ENCODE measurements at regions of chr16 and their contacts with region 1.

Region 1: DNA sequence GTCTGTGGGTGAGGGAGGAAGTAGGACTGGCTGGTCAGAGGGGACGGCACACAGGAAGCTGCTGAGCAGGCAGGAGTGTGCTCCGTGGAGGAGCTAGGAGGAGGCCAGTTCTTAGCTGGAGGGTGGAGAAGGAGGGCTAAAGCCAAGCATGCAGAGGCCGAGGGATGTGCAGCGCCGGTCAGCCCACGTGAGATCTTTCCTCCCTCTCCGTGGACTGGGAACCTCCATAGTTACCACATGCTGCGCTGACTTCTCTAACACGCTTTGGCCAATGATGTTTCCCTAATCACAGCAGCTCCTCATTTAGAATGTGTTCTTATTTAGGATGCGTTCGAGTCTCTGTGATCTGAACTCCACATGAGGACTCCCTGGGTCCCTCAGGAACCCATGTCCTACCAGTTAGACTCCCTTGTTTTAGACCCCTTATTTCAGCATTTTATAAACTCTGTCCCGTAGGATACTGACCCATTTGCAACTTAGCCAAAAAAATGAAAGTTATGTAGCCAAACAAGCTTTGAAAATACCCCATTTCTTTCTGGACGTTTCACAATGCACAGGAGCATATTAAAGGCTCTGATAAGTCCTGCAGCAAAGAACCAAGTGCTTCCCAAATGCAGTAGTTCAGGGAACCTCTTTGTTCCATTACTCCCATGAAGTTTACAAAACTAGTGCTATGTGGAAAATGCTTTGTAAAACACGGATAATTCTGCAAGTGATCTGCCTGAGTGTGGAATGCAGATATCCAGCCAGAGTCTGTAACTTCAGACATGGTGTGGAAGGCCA is 51.4 kb downstream of the IRF8 start:
- DNase-seq: no peak
- ATAC-seq: no peak
- H3K4me3 ChIP-seq: no peak overlapping the region
- H3K27ac ChIP-seq: no peak overlapping the region
- H3K4me1 ChIP-seq: no peaks in the 10 kb centered on the region
- H3K27me3 ChIP-seq: no peaks in the 10 kb centered on the region; the same call in 1 of the 2 replicates
- CTCF ChIP-seq: no peak

Region 2: GRCh38 chr16:85706427-85707034 is 243.8 kb before region 1 on chr16:
- CTCF ChIA-PET with region 1: interaction called, 14 read pairs
- POLR2A ChIA-PET with region 1: no interaction called
- in situ Hi-C with region 1: no loop called
- intact Hi-C with region 1: no loop called
- DNase-seq: no peak
- ATAC-seq: no peak
- H3K4me3 ChIP-seq: no peak overlapping the region
- H3K27ac ChIP-seq: no peak overlapping the region
- H3K4me1 ChIP-seq: no peaks in the 10 kb centered on the region
- H3K27me3 ChIP-seq: no peaks in the 10 kb centered on the region
- CTCF ChIP-seq: no peak

Region 3: DNA sequence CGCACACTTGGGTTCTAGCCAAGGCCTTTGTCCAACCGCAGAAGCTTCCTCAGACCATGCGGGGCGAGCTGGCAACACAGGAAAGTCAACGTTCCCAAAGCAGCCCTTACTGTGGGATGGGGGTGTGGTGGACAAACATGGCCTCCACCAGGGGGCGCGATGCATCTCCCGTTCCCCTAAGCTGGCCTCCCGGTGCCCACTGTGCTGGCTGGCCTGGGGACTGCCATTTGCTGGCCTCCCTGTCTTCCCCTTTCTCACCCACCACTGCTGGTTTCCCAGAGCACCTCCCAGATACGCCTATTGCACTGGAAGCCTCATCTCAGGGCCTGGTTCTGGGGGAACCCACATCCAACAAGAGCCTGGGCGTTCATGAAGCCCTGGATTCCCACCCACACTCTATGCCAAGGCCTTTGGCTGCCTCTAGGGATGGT is 93.9 kb after region 1 on chr16:
- CTCF ChIA-PET with region 1: no interaction called
- POLR2A ChIA-PET with region 1: no interaction called
- in situ Hi-C with region 1: no loop called
- intact Hi-C with region 1: no loop called
- DNase-seq: peak; percentile 8
- ATAC-seq: peak; percentile 67; the same call in 1 of the 2 replicates
- H3K4me3 ChIP-seq: no peak overlapping the region
- H3K27ac ChIP-seq: no peak overlapping the region
- H3K4me1 ChIP-seq: no peaks in the 10 kb centered on the region
- H3K27me3 ChIP-seq: no peaks in the 10 kb centered on the region
- CTCF ChIP-seq: peak; percentile 68; the same call in 1 of the 2 replicates

Region 4: GRCh38 chr16:86649875-86650274 is 699.5 kb after region 1 on chr16:
- CTCF ChIA-PET with region 1: no interaction called
- POLR2A ChIA-PET with region 1: no interaction called
- in situ Hi-C with region 1: no loop called
- intact Hi-C with region 1: no loop called
- DNase-seq: no peak
- ATAC-seq: no peak
- H3K4me3 ChIP-seq: no peak overlapping the region
- H3K27ac ChIP-seq: no peak overlapping the region
- H3K4me1 ChIP-seq: no peaks in the 10 kb centered on the region
- H3K27me3 ChIP-seq: no peaks in the 10 kb centered on the region
- CTCF ChIP-seq: no peak

Measured in Panc1 (cell line).